A549 (cell line): ENCODE measurements at regions of chr19 and their contacts with region 1.

Region 1: GRCh38 chr19:50476224-50476942 is at the starts of genes EMC10 and GARIN5A:
- DNase-seq: peak; percentile 99
- ATAC-seq: peak; percentile 73 to 91
- H3K4me3 ChIP-seq: peak within 1 kb of the TSS; percentile 86
- H3K27ac ChIP-seq: peak within 1 kb of the TSS; percentile 87 to 93
- H3K4me1 ChIP-seq: peaks cover 12% of the 10 kb centered on the region
- CTCF ChIP-seq: no peak
- EP300 ChIP-seq: no peak
- POLR2A ChIP-seq: peak; percentile 96
- RAD21 ChIP-seq: no peak
- polyA plus RNA-seq, gene EMC10: 52.8 and 54.0 TPM in 2 replicates
- polyA plus RNA-seq, gene GARIN5A: 0.57 and 1.1 TPM in 2 replicates

Region 2: GRCh38 chr19:50349277-50350057 is 126.9 kb before region 1 on chr19:
- CTCF ChIA-PET with region 1: interaction called, 10 read pairs
- POLR2A ChIA-PET with region 1: no interaction called
- DNase-seq: no peak
- ATAC-seq: no peak
- H3K4me3 ChIP-seq: no peak overlapping the region
- H3K27ac ChIP-seq: no peak overlapping the region
- H3K4me1 ChIP-seq: no peaks in the 10 kb centered on the region
- CTCF ChIP-seq: no peak
- EP300 ChIP-seq: no peak
- POLR2A ChIP-seq: no peak
- RAD21 ChIP-seq: no peak

Region 3: DNA sequence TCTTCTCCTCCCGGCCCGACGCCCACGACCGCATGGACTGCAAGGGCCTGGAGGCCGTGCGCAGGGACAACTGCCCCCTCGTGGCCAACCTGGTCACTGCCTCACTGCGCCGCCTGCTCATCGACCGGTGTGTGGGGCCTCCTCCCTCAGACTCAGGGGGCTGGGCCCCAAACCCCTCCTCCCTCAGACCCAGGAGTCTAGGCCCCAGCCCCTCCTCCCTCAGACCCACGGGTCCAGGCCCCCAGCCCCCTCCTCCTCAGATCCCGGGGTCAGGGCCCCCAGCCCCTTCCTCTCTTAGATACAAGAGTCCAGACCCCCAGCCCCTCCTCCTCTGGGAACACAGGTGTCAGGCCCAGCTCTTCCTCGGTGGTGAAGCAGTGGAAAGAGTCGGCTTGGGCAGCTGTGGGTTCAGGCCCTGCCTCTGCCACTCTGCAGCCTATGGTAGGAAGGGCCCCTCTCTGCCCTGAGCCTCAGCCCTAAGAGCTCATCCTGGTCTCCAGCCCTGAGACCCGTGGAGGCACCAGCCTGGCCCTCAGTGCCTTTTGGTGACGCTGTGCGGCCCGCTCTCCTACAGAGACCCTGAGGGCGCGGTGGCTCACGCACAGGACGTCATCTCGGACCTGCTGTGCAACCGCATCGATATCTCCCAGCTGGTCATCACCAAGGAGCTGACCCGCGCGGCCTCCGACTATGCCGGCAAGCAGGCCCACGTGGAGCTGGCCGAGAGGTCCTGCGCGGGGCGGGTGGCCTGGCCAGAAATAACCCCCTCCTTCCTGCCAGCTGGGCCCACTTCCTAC is 61.3 kb before region 1 on chr19:
- CTCF ChIA-PET with region 1: interaction called, 12 read pairs
- POLR2A ChIA-PET with region 1: no interaction called
- DNase-seq: peak; percentile 86 to 89
- ATAC-seq: peak; percentile 67 to 89
- H3K4me3 ChIP-seq: no peak overlapping the region
- H3K27ac ChIP-seq: no peak overlapping the region
- H3K4me1 ChIP-seq: no peaks in the 10 kb centered on the region
- CTCF ChIP-seq: peak; percentile 82
- EP300 ChIP-seq: no peak
- POLR2A ChIP-seq: no peak
- RAD21 ChIP-seq: peak; percentile 52 to 59; a peak in 4 of 5 replicates

Region 4: DNA sequence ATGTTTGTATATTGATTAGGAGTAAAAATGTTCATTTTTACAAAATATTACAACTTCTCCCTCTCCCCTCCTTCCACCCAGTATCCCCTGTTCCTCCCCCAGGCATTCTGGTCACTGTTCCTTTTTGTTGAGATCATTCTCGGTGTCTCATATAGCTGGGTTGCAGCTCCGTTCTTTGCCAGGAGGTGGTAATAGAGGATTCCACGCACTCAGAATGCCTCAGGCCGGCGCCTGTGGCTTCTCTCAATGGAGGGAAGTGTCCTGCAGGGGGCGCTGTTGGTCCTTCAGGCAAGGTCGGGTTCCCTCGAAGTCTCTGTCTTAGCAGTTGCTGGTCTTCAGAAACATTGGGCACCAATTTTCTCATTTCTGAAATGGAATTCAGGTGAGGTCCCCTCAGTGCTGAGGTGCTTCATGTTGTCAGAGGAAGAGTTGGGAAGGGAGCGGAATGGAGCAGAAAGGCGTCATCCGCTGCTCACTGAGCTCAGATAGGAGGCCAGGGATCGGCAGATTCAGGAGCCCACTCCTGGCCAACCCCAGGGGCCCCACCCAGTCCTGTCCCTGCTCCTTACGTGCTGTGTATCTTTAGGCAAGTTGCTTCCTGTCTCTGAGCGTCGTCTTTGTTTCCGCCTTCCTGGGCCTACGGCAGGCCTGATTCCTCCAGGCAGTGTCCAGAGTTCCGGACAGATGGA is 10.6 kb after region 1 on chr19:
- CTCF ChIA-PET with region 1: interaction called, 24 read pairs
- POLR2A ChIA-PET with region 1: no interaction called
- DNase-seq: peak in 1 of 2 experiments; percentile 92
- ATAC-seq: peak in 1 of 2 experiments; percentile 52; a peak in 3 of 6 replicates
- H3K4me3 ChIP-seq: no peak overlapping the region
- H3K27ac ChIP-seq: no peak overlapping the region
- H3K4me1 ChIP-seq: peaks cover 4% of the 10 kb centered on the region; the same call in 2 of the 3 replicates
- CTCF ChIP-seq: peak; percentile 50
- EP300 ChIP-seq: no peak
- POLR2A ChIP-seq: no peak
- RAD21 ChIP-seq: peak in 1 of 2 experiments; percentile 43; a peak in 2 of 5 replicates

Region 5: DNA sequence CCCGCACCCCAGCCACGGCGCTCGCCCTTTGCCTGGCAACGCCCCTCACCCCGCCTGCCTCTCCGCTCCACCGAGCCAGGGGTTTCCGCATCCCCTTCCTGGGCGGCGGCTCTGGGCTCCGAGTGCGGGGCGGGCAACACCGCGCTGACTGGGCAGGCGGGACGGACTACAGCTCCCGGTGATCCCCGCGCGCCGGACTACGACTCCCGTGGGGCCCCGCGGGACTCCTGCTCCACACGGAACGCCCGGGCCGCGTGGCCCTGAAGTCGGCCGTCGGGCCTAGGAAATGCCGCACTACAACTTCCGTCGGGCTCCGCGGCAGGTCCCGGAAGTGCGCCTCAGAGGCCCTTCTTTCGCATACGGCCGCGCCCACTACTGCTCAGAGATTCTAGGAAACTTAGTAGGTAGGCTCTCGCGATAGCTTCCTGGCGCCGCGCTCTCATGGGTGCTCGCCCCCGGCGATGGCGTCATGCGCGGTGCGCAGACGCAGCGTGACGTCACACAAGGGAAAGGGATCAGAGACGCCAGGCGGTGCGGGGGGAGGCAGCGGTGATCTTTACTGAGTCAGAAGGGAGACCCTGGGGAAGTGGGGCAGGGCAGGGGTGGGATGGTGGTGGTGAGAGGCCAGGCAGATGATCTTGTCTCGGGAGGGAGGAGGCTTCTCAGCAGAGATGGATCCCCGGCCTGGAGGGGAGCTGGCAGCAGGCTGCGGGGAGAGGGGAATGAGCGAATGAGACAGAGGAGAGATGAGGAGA is 34.9 kb after region 1 on chr19 and contains the start of gene JOSD2:
- CTCF ChIA-PET with region 1: interaction called, 11 read pairs
- POLR2A ChIA-PET with region 1: no interaction called
- DNase-seq: peak; percentile 99 to 100
- ATAC-seq: peak; percentile 80 to 94
- H3K4me3 ChIP-seq: peak within 1 kb of the TSS; percentile 76
- H3K27ac ChIP-seq: peak within 1 kb of the TSS; percentile 91 to 92
- H3K4me1 ChIP-seq: peaks cover 12% of the 10 kb centered on the region; the same call in 2 of the 3 replicates
- CTCF ChIP-seq: no peak
- EP300 ChIP-seq: no peak
- POLR2A ChIP-seq: peak; percentile 65
- RAD21 ChIP-seq: no peak
- polyA plus RNA-seq, gene JOSD2: 19.3 and 24.2 TPM in 2 replicates

Region 6: DNA sequence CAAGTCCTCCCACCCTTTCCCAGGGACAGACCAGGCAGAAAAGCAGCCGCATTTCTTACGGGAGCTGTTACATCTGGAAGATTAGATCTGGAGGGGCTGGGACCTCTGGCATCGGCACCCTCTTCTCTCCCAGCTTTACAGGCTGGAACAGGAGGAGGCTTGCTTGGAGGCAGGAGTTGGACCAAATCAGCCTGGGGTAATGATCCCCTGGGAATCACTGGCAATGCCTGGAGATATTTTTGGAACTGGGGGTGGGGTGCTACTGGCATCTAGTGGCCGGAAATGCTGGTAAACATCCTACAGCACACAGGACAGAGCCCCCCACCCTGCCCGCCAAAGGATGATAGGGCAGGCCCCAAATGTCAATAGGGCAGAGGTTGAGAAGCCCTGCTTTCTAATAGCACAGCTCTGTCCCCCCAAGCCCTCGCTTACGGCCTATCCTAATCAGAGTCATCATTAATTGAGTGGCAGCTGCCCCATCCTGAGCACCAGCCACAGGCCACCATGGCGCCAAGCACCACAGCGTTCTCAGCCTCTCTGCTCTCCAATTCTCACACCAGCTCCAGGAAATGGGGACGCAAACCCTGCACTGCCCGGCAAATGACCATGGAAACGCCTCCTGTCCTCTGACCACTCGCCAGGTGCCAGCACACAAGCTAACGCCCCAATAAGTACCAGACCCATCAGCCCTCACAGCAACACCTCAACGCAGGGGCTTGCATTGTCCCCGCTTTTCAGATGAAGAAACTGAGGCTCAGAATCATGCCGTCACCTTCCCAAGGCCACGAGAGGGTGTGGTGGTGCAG is 71.2 kb after region 1 on chr19:
- CTCF ChIA-PET with region 1: no interaction called
- POLR2A ChIA-PET with region 1: no interaction called
- DNase-seq: no peak
- ATAC-seq: peak; percentile 4 to 13; a peak in 4 of 6 replicates
- H3K4me3 ChIP-seq: no peak overlapping the region
- H3K27ac ChIP-seq: no peak overlapping the region
- H3K4me1 ChIP-seq: peaks cover 3% of the 10 kb centered on the region; the same call in 1 of the 3 replicates
- CTCF ChIP-seq: no peak
- EP300 ChIP-seq: no peak
- POLR2A ChIP-seq: no peak
- RAD21 ChIP-seq: peak; percentile 14 to 22; a peak in 1 of 5 replicates